IMR-90 (cell line): ENCODE measurements at regions of chr12 and their contacts with region 1.

Region 1: DNA sequence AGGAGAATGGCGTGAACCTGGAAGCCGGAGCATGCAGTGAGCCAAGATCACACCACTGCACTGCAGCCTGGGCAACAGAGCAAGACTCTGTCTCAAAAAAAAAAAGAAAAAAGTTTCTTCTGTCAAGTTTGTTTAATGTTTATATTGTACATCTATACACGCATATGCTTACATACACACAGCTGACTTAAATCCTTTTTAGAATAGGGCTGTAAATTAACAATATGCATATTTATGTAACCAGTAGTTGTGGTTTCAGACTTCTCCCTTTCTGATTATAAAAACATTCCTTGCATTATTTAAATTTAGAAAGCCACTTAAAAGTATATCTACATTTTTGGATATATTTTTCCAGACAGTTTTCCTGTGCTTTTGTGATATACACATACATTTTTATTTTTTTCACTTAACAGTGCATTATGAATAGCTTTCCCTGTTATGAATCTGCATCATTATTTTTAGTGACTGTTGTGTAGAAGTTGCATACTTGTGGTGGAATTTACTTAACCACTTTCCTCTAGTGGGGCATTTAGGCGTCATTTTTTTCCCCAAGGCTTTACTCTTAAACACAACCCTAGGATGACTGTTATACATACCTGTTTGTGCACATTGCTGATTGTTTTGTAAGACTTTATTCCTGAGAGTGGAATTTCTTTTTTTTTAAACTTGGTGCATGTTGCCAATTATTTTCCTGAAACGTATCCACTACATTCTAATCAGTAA is 29.4 kb downstream of the POLR3B start:
- DNase-seq: peak; percentile 65
- ATAC-seq: peak; percentile 77
- H3K4me3 ChIP-seq: no peak overlapping the region
- H3K27ac ChIP-seq: no peak overlapping the region
- H3K4me1 ChIP-seq: no peaks in the 10 kb centered on the region
- H3K27me3 ChIP-seq: no peaks in the 10 kb centered on the region
- CTCF ChIP-seq: no peak
- POLR2A ChIP-seq: no peak
- RAD21 ChIP-seq: no peak

Region 2: DNA sequence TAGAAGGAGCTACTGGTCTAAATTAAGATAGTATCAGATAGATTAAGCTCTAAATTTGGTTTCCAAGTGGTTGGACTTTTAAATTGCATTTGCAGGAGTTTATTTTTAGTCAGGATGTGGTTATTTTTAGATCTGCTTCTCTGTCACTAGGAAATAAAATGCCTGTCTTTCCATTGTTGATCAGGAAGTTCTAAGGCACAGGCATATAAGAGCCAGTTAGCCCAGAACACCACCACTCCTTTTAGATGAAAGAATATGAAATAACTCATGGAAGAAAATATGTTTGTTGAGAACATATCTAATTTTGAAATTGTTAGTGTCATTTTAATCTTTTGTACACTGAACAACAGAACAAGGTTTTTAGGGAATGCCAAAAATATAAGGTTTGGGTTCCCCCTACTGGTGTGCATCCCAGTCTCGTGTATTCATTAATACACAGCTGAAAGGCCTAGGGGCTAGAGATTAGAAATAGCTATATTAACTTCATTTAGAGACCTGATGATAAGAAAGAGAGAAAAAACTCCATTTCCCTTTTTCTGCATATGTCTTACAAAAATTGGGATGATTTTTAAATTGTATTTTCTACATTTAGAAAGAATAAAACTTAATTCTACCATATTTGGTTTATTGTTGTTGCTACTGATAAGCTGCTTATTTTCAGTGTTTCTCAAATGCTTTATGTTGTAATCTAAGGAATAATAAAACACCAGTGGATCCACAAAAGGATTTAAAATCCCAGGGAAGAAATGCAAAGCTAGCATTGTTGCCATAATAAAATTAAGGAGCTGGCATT is 454.7 kb after region 1 on chr12:
- CTCF ChIA-PET with region 1: no interaction called
- POLR2A ChIA-PET with region 1: no interaction called
- dilution Hi-C with region 1: no loop called
- in situ Hi-C with region 1: loop called (anchors 10 kb)
- intact Hi-C with region 1: loop called (anchors 1 kb)
- DNase-seq: peak; percentile 45
- ATAC-seq: peak; percentile 65
- H3K4me3 ChIP-seq: no peak overlapping the region
- H3K27ac ChIP-seq: no peak overlapping the region
- H3K4me1 ChIP-seq: peaks cover 5% of the 10 kb centered on the region
- H3K27me3 ChIP-seq: no peaks in the 10 kb centered on the region
- CTCF ChIP-seq: peak; percentile 65
- POLR2A ChIP-seq: no peak
- RAD21 ChIP-seq: peak; percentile 72

Region 3: GRCh38 chr12:106861984-106862916 is 475.3 kb after region 1 on chr12:
- CTCF ChIA-PET with region 1: no interaction called
- POLR2A ChIA-PET with region 1: no interaction called
- dilution Hi-C with region 1: no loop called
- in situ Hi-C with region 1: no loop called
- intact Hi-C with region 1: loop called (anchors 5 kb)
- DNase-seq: peak; percentile 90
- ATAC-seq: peak; percentile 75
- H3K4me3 ChIP-seq: no peak overlapping the region
- H3K27ac ChIP-seq: peak overlapping the region; percentile 54; the same call in 1 of the 2 replicates
- H3K4me1 ChIP-seq: peaks cover 10% of the 10 kb centered on the region
- H3K27me3 ChIP-seq: no peaks in the 10 kb centered on the region
- CTCF ChIP-seq: no peak
- POLR2A ChIP-seq: no peak
- RAD21 ChIP-seq: no peak

Region 4: DNA sequence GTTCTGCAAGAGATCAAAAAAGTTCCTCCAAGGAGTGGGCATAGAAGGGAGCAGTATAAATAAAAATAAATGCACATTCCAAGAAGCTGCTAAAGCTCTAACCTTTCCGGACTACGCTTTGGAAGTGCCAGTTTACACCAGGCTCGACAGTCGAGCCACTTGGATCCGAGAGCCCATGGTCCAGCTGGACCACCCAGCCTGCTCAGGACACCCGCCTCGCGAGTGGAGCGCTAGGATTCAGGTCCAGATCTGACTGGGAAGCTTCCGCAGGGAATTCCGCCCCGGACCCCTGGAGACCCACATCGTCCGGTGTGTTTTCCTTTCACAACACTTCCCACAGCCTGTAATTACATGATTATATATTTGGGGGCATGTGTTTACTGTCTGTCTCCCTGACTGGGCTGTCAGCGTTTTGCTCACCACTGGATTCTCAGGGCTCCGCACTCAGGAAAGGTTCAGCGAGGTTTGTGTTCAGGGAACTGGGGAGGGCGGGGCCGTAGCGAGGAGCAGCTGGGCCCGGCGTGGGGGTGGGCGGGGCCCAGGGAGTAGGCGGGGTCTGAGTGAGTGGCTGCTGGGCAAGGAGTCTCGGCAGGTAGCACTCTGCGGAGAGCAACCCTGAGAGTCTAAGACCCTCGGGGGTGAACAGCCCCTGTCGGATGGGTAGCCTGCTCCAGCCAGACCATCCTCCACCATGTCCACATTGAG is 516.4 kb after region 1 on chr12:
- CTCF ChIA-PET with region 1: no interaction called
- POLR2A ChIA-PET with region 1: no interaction called
- dilution Hi-C with region 1: loop called (anchors 25 kb)
- in situ Hi-C with region 1: no loop called
- intact Hi-C with region 1: no loop called
- DNase-seq: peak; percentile 33
- ATAC-seq: peak; percentile 99
- H3K4me3 ChIP-seq: peak overlapping the region; percentile 34
- H3K27ac ChIP-seq: no peak overlapping the region
- H3K4me1 ChIP-seq: no peaks in the 10 kb centered on the region
- H3K27me3 ChIP-seq: peaks cover 12% of the 10 kb centered on the region; the same call in 1 of the 2 replicates
- CTCF ChIP-seq: no peak
- POLR2A ChIP-seq: no peak
- RAD21 ChIP-seq: no peak

Region 5: GRCh38 chr12:107109741-107110719 is 723.1 kb after region 1 on chr12:
- CTCF ChIA-PET with region 1: no interaction called
- POLR2A ChIA-PET with region 1: no interaction called
- dilution Hi-C with region 1: no loop called
- in situ Hi-C with region 1: no loop called
- intact Hi-C with region 1: loop called (anchors 2 kb)
- DNase-seq: no peak
- ATAC-seq: no peak
- H3K4me3 ChIP-seq: no peak overlapping the region
- H3K27ac ChIP-seq: no peak overlapping the region
- H3K4me1 ChIP-seq: no peaks in the 10 kb centered on the region
- H3K27me3 ChIP-seq: peaks cover 26% of the 10 kb centered on the region
- CTCF ChIP-seq: no peak
- POLR2A ChIP-seq: no peak
- RAD21 ChIP-seq: no peak

Region 6: GRCh38 chr12:107309020-107309419 is 922.0 kb after region 1 on chr12:
- CTCF ChIA-PET with region 1: no interaction called
- POLR2A ChIA-PET with region 1: no interaction called
- dilution Hi-C with region 1: no loop called
- in situ Hi-C with region 1: no loop called
- intact Hi-C with region 1: no loop called
- DNase-seq: no peak
- ATAC-seq: no peak
- H3K4me3 ChIP-seq: no peak overlapping the region
- H3K27ac ChIP-seq: no peak overlapping the region
- H3K4me1 ChIP-seq: no peaks in the 10 kb centered on the region
- H3K27me3 ChIP-seq: peaks cover 34% of the 10 kb centered on the region
- CTCF ChIP-seq: no peak
- POLR2A ChIP-seq: no peak
- RAD21 ChIP-seq: no peak